ENCODE measurements at regions of chr19 and their contacts with region 1.

Region 1: DNA sequence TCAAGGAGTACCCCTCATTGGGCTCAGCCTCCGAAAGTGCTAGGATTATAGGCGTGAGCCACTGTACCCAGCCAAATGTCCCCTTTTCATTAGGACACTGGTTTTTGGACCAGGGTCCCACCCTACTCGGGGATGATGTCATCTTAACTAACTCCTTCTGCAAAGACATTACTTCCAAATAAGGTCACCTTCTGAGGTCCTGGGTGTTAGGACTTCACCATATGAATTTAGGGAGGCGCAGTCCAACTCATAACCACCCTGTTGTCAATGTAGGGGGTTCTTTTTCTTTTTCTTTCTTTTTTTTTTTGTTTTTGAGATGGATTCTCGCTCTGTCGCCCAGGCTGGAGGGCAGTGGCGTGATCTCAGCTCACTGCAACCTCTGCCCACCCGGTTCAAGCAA is 32.7 kb upstream of the NFIC start:
- DNase-seq: no peak
- CTCF ChIP-seq: no peak

Region 2: GRCh38 chr19:3434712-3435553 is 101.3 kb after region 1 on chr19:
- in situ Hi-C with region 1: loop called (anchors 5 kb)
- DNase-seq: peak; percentile 97
- CTCF ChIP-seq: no peak